HepG2 (cell line): ENCODE measurements at regions of chr21 and their contacts with region 1.

Region 1: GRCh38 chr21:26715878-26716506 is 129.2 kb downstream of the ADAMTS1 start:
- DNase-seq: peak; percentile 6
- ATAC-seq: peak; percentile 88
- H3K4me3 ChIP-seq: no peak overlapping the region
- H3K27ac ChIP-seq: no peak overlapping the region
- H3K4me1 ChIP-seq: no peaks in the 10 kb centered on the region
- H3K27me3 ChIP-seq: no peaks in the 10 kb centered on the region
- CTCF ChIP-seq: peak; percentile 54
- EP300 ChIP-seq: no peak
- POLR2A ChIP-seq: no peak
- RAD21 ChIP-seq: no peak

Region 2: GRCh38 chr21:25881525-25882376 is 834.2 kb before region 1 on chr21:
- CTCF ChIA-PET with region 1: interaction called, 8 read pairs
- POLR2A ChIA-PET with region 1: no interaction called
- in situ Hi-C with region 1: no loop called
- intact Hi-C with region 1: loop called (anchors 2 kb)
- DNase-seq: peak; percentile 39
- ATAC-seq: peak; percentile 78
- H3K4me3 ChIP-seq: no peak overlapping the region
- H3K27ac ChIP-seq: no peak overlapping the region
- H3K4me1 ChIP-seq: peaks cover 24% of the 10 kb centered on the region
- H3K27me3 ChIP-seq: no peaks in the 10 kb centered on the region
- CTCF ChIP-seq: peak; percentile 85
- EP300 ChIP-seq: no peak
- POLR2A ChIP-seq: no peak
- RAD21 ChIP-seq: peak; percentile 60; the same call in 1 of the 2 replicates

Region 3: GRCh38 chr21:27700974-27701614 is 985.1 kb after region 1 on chr21:
- CTCF ChIA-PET with region 1: no interaction called
- POLR2A ChIA-PET with region 1: no interaction called
- in situ Hi-C with region 1: no loop called
- intact Hi-C with region 1: loop called (anchors 5 kb)
- DNase-seq: peak; percentile 20
- ATAC-seq: peak; percentile 91
- H3K4me3 ChIP-seq: no peak overlapping the region
- H3K27ac ChIP-seq: no peak overlapping the region
- H3K4me1 ChIP-seq: no peaks in the 10 kb centered on the region
- H3K27me3 ChIP-seq: no peaks in the 10 kb centered on the region
- CTCF ChIP-seq: peak; percentile 76
- EP300 ChIP-seq: no peak
- POLR2A ChIP-seq: no peak
- RAD21 ChIP-seq: peak; percentile 69